ENCODE measurements at regions of chrX and their contacts with region 1.

Region 1: DNA sequence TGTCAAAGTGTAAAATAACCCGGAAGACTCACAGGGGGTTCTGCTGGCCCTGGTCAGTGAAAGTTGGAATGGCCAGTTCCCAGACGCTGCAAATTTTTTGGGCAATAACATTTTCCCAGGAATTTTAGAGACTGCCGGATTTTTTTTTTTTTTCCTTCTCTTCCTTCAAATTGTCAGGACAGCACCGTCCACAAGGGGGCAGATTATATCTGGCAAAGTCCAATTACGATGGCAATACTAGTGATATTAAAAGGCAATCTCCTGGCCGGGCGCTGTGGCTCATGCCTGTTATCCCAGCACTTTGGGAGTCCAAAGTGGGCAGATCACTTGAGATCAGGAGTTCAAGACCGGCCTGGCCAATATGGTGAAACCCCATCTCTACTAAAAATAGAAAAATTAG is 20.5 kb downstream of the SLC25A5 start:
- DNase-seq: no peak
- H3K4me3 ChIP-seq: no peak overlapping the region
- H3K27me3 ChIP-seq: no peaks in the 10 kb centered on the region
- CTCF ChIP-seq: peak; percentile 59

Region 2: GRCh38 chrX:119502727-119503483 is 14.2 kb after region 1 on chrX:
- CTCF ChIA-PET with region 1: interaction called, 10 read pairs
- POLR2A ChIA-PET with region 1: no interaction called
- DNase-seq: no peak
- H3K4me3 ChIP-seq: no peak overlapping the region
- H3K27me3 ChIP-seq: no peaks in the 10 kb centered on the region
- CTCF ChIP-seq: no peak

Measured in BJ (cell line).